Transverse colon (tissue), 4 donors: ENCODE measurements at regions of chr21 and their contacts with region 1.

Region 1: DNA sequence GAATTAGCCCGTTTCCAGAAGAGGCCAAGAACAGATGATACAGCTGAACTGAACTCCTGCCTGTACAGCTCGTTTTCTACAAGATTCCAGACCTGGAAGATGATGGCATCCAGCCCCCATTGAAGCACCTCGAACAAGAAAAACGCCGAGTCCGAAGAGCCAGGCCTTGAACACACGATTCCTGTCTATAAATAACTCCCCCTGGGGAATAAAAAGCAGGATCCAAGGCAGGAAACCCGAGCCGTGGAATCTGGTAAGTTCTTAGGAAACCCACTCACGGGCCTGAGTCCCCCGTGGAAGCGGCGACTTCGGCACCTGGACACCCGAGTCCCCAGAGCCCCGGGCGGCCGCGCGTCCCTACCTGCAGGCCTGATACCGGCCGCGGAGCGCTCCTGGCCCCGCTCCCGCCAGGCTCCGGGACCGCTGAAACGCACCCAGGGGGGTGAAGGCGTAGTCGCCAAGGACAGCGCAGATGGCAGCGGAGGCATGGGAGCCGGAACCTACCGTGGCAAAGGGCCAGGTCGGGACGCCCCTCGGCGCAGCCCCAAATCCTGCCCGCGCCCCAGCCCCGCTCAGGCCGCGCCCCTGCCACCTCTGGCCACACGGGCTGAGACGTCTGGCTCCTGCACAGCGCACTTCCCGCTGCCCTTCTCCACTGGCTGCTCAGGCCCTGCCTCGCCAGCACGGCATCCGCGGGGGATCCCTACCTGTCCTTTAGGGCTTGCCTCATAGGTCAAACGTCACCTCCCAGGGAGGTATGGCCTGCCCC is 14.0 kb upstream of the HLCS start:
- DNase-seq: peak; percentile 36
- H3K4me3 ChIP-seq: peak overlapping the region; percentile 5 to 63 (median 34)
- H3K27ac ChIP-seq: no peak overlapping the region
- H3K4me1 ChIP-seq: peaks cover 0 to 20% (median 7%) of the 10 kb centered on the region in 4 donors
- H3K27me3 ChIP-seq: no peaks in the 10 kb centered on the region
- CTCF ChIP-seq: peak in 3 of 5 experiments; percentile 5 to 37 (median 31)
- EP300 ChIP-seq: no peak
- POLR2A ChIP-seq: no peak

Region 2: GRCh38 chr21:37079211-37079824 is 98.9 kb after region 1 on chr21:
- in situ Hi-C with region 1: loop called in 3 of 4 experiments (anchors 5 to 25 kb)
- intact Hi-C with region 1: no loop called
- DNase-seq: no peak
- H3K4me3 ChIP-seq: no peak overlapping the region
- H3K27ac ChIP-seq: no peak overlapping the region
- H3K4me1 ChIP-seq: peaks cover 11 to 35% (median 23%) of the 10 kb centered on the region in 4 donors
- H3K27me3 ChIP-seq: no peaks in the 10 kb centered on the region
- CTCF ChIP-seq: peak; percentile 28 to 48 (median 34)
- EP300 ChIP-seq: no peak
- POLR2A ChIP-seq: no peak